ENCODE measurements at regions of chr17 and their contacts with region 1.

Region 1: GRCh38 chr17:68613739-68614298 is 12.7 kb upstream of the FAM20A start:
- DNase-seq: peak; percentile 51
- ATAC-seq: peak; percentile 26
- H3K4me3 Mint-ChIP-seq: no peak overlapping the region
- H3K27ac Mint-ChIP-seq: no peak overlapping the region
- H3K4me1 Mint-ChIP-seq: no peaks in the 10 kb centered on the region
- H3K27me3 Mint-ChIP-seq: peaks cover 21% of the 10 kb centered on the region

Region 2: DNA sequence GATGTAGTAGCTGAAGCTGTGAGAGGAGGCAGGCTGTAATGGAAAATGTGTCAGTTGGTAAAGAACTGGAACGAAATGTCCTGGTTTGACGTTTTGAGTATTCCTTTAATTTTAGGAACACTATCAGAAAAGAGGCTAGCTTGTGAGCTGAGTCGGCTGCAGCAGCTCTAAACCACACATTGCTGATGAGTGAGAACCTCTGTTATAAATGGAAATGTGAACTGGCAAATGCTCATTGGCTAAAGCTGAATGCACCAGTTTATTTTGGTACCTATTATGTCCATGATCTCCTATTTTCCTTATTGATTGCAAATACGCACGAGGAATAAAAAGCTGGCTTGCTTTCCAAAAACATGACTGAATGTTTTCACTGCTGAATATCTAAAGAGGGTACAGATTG is 145.5 kb before region 1 on chr17:
- CTCF ChIA-PET with region 1: no interaction called
- POLR2A ChIA-PET with region 1: no interaction called
- intact Hi-C with region 1: loop called in 1 of 2 experiments (anchors 5 kb)
- DNase-seq: no peak
- ATAC-seq: no peak
- H3K4me3 Mint-ChIP-seq: no peak overlapping the region
- H3K27ac Mint-ChIP-seq: no peak overlapping the region
- H3K4me1 Mint-ChIP-seq: peaks cover 5% of the 10 kb centered on the region
- H3K27me3 Mint-ChIP-seq: no peaks in the 10 kb centered on the region

Region 3: DNA sequence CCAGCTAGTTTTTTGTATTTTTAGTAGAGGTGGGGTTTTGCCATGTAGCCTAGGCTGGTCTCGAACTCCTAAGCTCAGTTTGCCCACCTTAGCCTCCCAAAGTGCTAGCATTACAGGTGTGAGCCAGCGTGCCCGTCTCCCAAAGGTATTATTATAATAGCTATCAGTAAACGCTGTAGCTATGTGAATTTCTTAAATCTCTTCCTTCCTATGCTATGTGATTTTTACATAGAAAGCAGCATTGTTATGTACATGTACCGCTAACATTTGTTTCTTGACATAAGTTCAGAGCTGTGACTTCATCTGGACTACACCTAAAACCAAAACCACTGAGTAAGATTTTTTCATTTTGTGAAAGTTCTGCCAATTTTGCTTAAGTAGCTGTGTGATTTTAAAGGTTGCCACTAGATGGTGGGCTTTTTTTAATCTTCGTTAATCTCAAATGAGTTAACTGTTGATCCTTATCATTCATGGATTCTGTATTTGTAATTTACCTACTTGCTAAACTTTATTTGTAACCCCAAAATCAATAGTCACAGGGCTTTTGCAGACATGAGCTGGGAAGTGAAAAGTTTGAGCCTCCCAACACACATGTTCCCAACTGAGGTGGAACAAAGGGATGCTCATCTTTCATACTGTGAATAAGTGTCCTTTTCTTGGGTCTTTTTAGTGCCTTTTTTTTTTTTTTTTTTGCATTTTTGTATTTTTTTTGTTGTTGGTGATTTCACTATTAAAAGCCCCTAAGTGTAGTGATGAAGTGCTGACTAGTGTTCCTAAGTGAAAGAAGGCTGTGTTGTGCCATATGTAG is 79.7 kb before region 1 on chr17:
- CTCF ChIA-PET with region 1: interaction called, 5 read pairs
- POLR2A ChIA-PET with region 1: no interaction called
- intact Hi-C with region 1: loop called (anchors 2 kb)
- DNase-seq: no peak
- ATAC-seq: peak; percentile 69
- H3K4me3 Mint-ChIP-seq: no peak overlapping the region
- H3K27ac Mint-ChIP-seq: peak overlapping the region; percentile 20
- H3K4me1 Mint-ChIP-seq: peaks cover 9% of the 10 kb centered on the region
- H3K27me3 Mint-ChIP-seq: no peaks in the 10 kb centered on the region